CD4-positive, alpha-beta memory T cell (primary cell): ENCODE measurements at regions of chr17 and their contacts with region 1.

Region 1: GRCh38 chr17:79810130-79811010 is 13.5 kb upstream of the CBX8 start:
- DNase-seq: peak; percentile 68 to 84 (median 75)
- H3K4me3 ChIP-seq: peak overlapping the region in 1 of 2 donors; percentile 35
- H3K4me3 Mint-ChIP-seq: peak overlapping the region in 6 of 8 donors; percentile 27 to 77 (median 51)
- H3K27ac ChIP-seq: no peak overlapping the region
- H3K27ac Mint-ChIP-seq: peak overlapping the region in 4 of 7 donors; percentile 51 to 88 (median 78)
- H3K4me1 ChIP-seq: peaks cover 47% of the 10 kb centered on the region
- H3K4me1 Mint-ChIP-seq: peaks cover 14 to 44% (median 25%) of the 10 kb centered on the region in 4 donors
- H3K27me3 ChIP-seq: peaks cover 69% of the 10 kb centered on the region
- H3K27me3 Mint-ChIP-seq: peaks cover 50 to 56% of the 10 kb centered on the region in 2 donors

Region 2: DNA sequence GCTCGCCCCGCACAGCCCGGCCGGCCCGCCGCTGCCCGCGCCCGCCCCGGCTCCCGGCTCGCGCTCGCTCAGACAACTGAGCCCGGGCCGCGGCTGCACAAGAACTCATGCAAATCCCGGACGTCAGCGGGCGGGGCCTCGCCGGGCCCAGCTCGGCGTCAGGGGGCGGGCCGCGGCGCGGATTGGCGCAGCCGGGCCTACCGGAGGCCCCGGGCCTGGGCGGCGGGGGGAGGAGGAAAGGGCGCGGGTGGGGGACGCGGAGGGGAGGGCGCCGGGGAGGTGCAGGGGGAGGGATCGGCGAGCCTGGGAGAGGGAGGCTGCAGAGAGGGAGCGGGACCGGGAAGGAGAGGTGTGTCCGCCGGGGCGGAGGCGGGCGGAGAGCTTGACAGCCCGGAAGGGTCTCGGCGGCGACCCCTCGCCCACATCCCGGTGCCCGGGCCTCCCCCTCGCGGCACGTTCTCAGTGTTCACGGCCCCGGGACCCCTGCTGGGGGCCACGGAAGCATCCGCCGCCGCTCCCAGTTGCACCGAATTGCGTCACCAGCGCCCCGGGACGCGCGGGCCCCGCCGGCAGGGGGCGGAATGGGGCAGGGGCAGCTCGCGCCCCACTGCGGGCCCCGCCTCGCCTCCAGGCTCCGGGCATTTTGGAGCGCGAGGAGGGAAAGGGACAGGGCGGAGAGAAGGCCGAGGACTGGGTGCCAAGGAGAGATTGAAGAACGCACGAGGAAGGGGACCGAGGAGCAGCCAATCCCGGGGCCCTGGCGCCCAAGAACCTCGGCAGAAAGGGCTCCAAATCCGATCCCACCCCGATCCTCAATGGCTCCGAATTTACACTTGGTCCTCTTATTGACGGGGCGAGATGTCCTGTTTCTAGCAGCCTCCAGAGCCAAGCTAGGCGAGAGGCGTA is 29.2 kb after region 1 on chr17 and contains the start of gene CBX4:
- CTCF ChIA-PET with region 1: interaction called, 7 read pairs
- POLR2A ChIA-PET with region 1: interaction called, 503 read pairs
- intact Hi-C with region 1: loop called (anchors 2 kb)
- DNase-seq: peak; percentile 85 to 92 (median 87)
- H3K4me3 ChIP-seq: peak within 1 kb of the TSS; percentile 89 to 99
- H3K4me3 Mint-ChIP-seq: peak within 1 kb of the TSS; percentile 91 to 97 (median 96)
- H3K27ac ChIP-seq: peak within 1 kb of the TSS; percentile 52
- H3K27ac Mint-ChIP-seq: peak within 1 kb of the TSS; percentile 89 to 98 (median 95)
- H3K4me1 ChIP-seq: peaks cover 75% of the 10 kb centered on the region
- H3K4me1 Mint-ChIP-seq: peaks cover 12 to 65% (median 40%) of the 10 kb centered on the region in 4 donors
- H3K27me3 ChIP-seq: peaks cover 37% of the 10 kb centered on the region
- H3K27me3 Mint-ChIP-seq: peaks cover 10 to 13% of the 10 kb centered on the region in 2 donors
- total RNA-seq, gene CBX4: 64.7 to 65.7 TPM